CD8-positive, alpha-beta T cell (primary cell): ENCODE measurements at regions of chr12 and their contacts with region 1.

Region 1: GRCh38 chr12:3964439-3964838 is 91.2 kb upstream of the PARP11 start:
- DNase-seq: no peak
- ATAC-seq: no peak
- H3K4me3 ChIP-seq: no peak overlapping the region
- H3K4me3 Mint-ChIP-seq: no peak overlapping the region
- H3K27ac ChIP-seq: no peak overlapping the region
- H3K27ac Mint-ChIP-seq: no peak overlapping the region
- H3K4me1 ChIP-seq: peaks cover 20% of the 10 kb centered on the region
- H3K4me1 Mint-ChIP-seq: peaks cover 29% of the 10 kb centered on the region
- H3K27me3 ChIP-seq: no peaks in the 10 kb centered on the region
- H3K27me3 Mint-ChIP-seq: no peaks in the 10 kb centered on the region
- CTCF ChIP-seq: no peak

Region 2: GRCh38 chr12:3896801-3897331 is 67.6 kb before region 1 on chr12:
- CTCF ChIA-PET with region 1: interaction called, 232 read pairs
- POLR2A ChIA-PET with region 1: interaction called, 12 read pairs
- intact Hi-C with region 1: no loop called
- DNase-seq: peak in 1 of 9 experiments; percentile 7
- ATAC-seq: peak; percentile 28
- H3K4me3 ChIP-seq: peak overlapping the region in 1 of 2 experiments; percentile 9
- H3K4me3 Mint-ChIP-seq: peak overlapping the region; percentile 65
- H3K27ac ChIP-seq: peak overlapping the region; percentile 26 to 47
- H3K27ac Mint-ChIP-seq: peak overlapping the region; percentile 96
- H3K4me1 ChIP-seq: peaks cover 52% of the 10 kb centered on the region
- H3K4me1 Mint-ChIP-seq: peaks cover 39% of the 10 kb centered on the region
- H3K27me3 ChIP-seq: no peaks in the 10 kb centered on the region
- H3K27me3 Mint-ChIP-seq: no peaks in the 10 kb centered on the region
- CTCF ChIP-seq: no peak

Region 3: GRCh38 chr12:3928540-3929184 is 35.8 kb before region 1 on chr12:
- CTCF ChIA-PET with region 1: interaction called, 20 read pairs
- POLR2A ChIA-PET with region 1: interaction called, 3 read pairs
- intact Hi-C with region 1: no loop called
- DNase-seq: no peak
- ATAC-seq: no peak
- H3K4me3 ChIP-seq: no peak overlapping the region
- H3K4me3 Mint-ChIP-seq: no peak overlapping the region
- H3K27ac ChIP-seq: no peak overlapping the region
- H3K27ac Mint-ChIP-seq: no peak overlapping the region
- H3K4me1 ChIP-seq: peaks cover 23% of the 10 kb centered on the region
- H3K4me1 Mint-ChIP-seq: peaks cover 53% of the 10 kb centered on the region
- H3K27me3 ChIP-seq: no peaks in the 10 kb centered on the region
- H3K27me3 Mint-ChIP-seq: no peaks in the 10 kb centered on the region
- CTCF ChIP-seq: no peak

Region 4: DNA sequence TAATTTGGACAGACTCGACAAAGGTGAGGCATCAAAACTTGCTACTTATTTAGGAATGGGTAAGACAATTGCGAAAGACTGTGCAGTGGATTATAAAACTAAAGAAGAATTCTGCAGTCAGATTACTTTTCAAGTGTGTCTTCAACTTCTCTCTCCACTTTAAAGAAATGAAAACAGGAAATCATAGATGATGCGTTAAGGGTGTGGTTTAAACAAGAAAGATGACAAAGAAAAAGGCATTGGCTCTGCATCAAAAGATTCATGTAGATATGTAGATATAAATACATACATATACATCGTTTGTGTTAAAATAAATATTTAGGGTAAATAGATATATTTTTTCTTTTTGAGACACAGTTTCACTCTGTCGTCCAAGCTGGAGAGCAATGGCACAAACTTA is 16.7 kb before region 1 on chr12:
- CTCF ChIA-PET with region 1: interaction called, 66 read pairs
- POLR2A ChIA-PET with region 1: interaction called, 49 read pairs
- intact Hi-C with region 1: loop called (anchors 1 to 2 kb)
- DNase-seq: peak in 2 of 9 experiments; percentile 55 to 75
- ATAC-seq: peak; percentile 75
- H3K4me3 ChIP-seq: no peak overlapping the region
- H3K4me3 Mint-ChIP-seq: peak overlapping the region; percentile 36
- H3K27ac ChIP-seq: peak overlapping the region; percentile 38 to 61
- H3K27ac Mint-ChIP-seq: peak overlapping the region; percentile 98
- H3K4me1 ChIP-seq: peaks cover 53% of the 10 kb centered on the region
- H3K4me1 Mint-ChIP-seq: peaks cover 62% of the 10 kb centered on the region
- H3K27me3 ChIP-seq: no peaks in the 10 kb centered on the region
- H3K27me3 Mint-ChIP-seq: no peaks in the 10 kb centered on the region
- CTCF ChIP-seq: no peak

Region 5: DNA sequence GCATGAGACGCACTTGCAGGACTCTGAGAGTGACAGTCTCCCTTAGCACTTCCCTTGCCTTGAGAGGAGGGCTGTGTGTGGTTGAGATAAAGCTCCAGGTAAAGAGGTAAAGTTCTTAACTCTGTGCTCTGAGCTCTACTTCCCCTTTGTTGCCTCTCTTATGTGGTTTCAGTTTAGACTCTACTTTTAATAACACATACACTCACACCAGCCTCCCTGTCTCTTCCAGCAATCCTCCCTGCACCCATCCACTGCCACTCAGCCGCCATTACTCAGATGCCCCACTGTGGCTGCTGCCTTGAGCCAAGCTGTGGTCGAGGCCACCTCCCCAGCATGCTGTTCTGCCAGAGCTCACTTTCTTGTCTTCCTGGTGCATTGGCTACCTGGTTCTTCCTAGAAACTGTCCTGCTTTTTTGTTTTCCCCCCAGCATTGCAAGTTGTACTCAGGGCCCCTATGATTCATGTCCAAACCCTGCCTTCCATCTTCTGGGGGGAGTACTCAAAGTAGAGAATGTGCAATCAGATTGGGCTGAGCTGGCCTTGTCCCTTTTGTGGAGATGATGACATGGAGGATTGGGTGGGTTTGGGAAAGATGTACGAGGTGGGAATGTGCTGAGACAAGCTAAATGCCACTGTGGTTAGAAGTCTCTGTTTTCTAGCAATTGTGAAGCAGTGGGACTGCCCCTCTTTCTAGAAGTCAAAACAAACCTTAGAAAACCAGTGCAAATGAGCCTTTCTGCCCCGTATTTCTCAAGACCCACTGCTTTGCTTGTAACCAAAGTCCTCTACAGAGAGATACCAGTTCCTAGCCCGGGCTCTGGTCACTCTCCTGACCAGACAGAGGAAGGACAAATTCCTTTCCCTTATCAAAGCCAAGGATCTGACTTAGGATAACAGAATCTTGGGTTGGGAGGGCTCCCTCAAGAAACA is 24.3 kb after region 1 on chr12:
- CTCF ChIA-PET with region 1: interaction called, 103 read pairs
- POLR2A ChIA-PET with region 1: interaction called, 17 read pairs
- intact Hi-C with region 1: loop called in 1 of 2 experiments (anchors 2 kb)
- DNase-seq: peak in 6 of 9 experiments; percentile 26 to 60 (median 30)
- ATAC-seq: peak; percentile 89
- H3K4me3 ChIP-seq: peak overlapping the region in 1 of 2 experiments; percentile 2
- H3K4me3 Mint-ChIP-seq: peak overlapping the region; percentile 60
- H3K27ac ChIP-seq: peak overlapping the region; percentile 5 to 52
- H3K27ac Mint-ChIP-seq: peak overlapping the region; percentile 91
- H3K4me1 ChIP-seq: peaks cover 29% of the 10 kb centered on the region
- H3K4me1 Mint-ChIP-seq: peaks cover 30% of the 10 kb centered on the region
- H3K27me3 ChIP-seq: no peaks in the 10 kb centered on the region
- H3K27me3 Mint-ChIP-seq: no peaks in the 10 kb centered on the region
- CTCF ChIP-seq: no peak

Region 6: GRCh38 chr12:4030929-4031702 is 66.7 kb after region 1 on chr12:
- CTCF ChIA-PET with region 1: interaction called, 58 read pairs
- POLR2A ChIA-PET with region 1: interaction called, 3 read pairs
- intact Hi-C with region 1: loop called (anchors 1 to 5 kb)
- DNase-seq: peak; percentile 48 to 88 (median 71)
- ATAC-seq: peak; percentile 91
- H3K4me3 ChIP-seq: peak overlapping the region; percentile 40 to 49
- H3K4me3 Mint-ChIP-seq: peak overlapping the region; percentile 78
- H3K27ac ChIP-seq: peak overlapping the region; percentile 37 to 40
- H3K27ac Mint-ChIP-seq: peak overlapping the region; percentile 70
- H3K4me1 ChIP-seq: peaks cover 32% of the 10 kb centered on the region
- H3K4me1 Mint-ChIP-seq: peaks cover 41% of the 10 kb centered on the region
- H3K27me3 ChIP-seq: no peaks in the 10 kb centered on the region
- H3K27me3 Mint-ChIP-seq: no peaks in the 10 kb centered on the region
- CTCF ChIP-seq: no peak

Region 7: DNA sequence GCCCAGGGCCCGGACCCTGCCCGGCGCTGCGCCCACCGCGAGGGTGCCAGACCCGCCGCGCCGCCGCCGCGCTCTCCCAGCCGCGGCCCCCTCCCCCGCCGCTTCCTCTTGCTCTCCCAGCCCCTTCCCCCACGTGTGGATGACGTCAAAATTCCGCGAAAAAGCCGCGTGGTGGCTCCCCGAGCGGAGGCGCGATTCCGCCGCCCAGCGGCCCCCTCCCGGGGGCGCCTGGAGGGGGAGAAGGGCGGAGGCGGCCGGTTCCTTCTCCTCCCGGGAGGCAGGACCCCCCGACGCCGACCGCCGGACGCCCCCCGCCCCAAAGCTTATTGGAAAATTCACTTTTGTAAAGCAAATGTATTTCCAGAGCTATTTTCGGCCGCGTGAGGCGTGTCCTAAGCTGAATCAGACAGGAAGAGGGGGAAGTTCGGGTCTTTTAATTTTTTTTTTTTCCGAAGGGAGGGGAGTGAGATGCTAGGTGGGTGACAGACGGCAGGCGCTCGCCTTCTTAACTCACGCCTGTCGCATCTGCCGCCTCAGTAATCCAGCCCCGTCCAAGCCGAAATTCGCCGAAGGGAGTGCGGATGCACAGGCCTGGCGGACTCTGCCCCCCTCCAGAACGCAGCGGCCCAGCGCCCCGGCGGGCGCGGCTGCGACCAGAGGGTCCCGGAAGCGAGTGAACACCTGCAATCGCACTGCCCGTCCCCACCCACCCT is 305.0 kb after region 1 on chr12:
- CTCF ChIA-PET with region 1: interaction called, 5 read pairs
- POLR2A ChIA-PET with region 1: interaction called, 10 read pairs
- intact Hi-C with region 1: no loop called
- DNase-seq: peak; percentile 87 to 97 (median 93)
- ATAC-seq: peak; percentile 42
- H3K4me3 ChIP-seq: peak overlapping the region; percentile 70 to 91
- H3K4me3 Mint-ChIP-seq: peak overlapping the region; percentile 100
- H3K27ac ChIP-seq: peak overlapping the region; percentile 93 to 94
- H3K27ac Mint-ChIP-seq: peak overlapping the region; percentile 95
- H3K4me1 ChIP-seq: peaks cover 20% of the 10 kb centered on the region
- H3K4me1 Mint-ChIP-seq: peaks cover 21% of the 10 kb centered on the region
- H3K27me3 ChIP-seq: no peaks in the 10 kb centered on the region
- H3K27me3 Mint-ChIP-seq: no peaks in the 10 kb centered on the region
- CTCF ChIP-seq: no peak